ENCODE measurements at regions of chr15 and their contacts with region 1.

Region 1: GRCh38 chr15:63599401-63600000 is 2.3 kb downstream of the FBXL22 start:
- DNase-seq: peak; percentile 72
- H3K4me3 ChIP-seq: peak overlapping the region; percentile 63 to 73
- H3K27ac ChIP-seq: peak overlapping the region; percentile 88 to 89
- H3K4me1 ChIP-seq: peaks cover 20% of the 10 kb centered on the region
- H3K27me3 ChIP-seq: no peaks in the 10 kb centered on the region
- CTCF ChIP-seq: peak; percentile 65 to 90 (median 83)
- POLR2A ChIP-seq: no peak

Region 2: DNA sequence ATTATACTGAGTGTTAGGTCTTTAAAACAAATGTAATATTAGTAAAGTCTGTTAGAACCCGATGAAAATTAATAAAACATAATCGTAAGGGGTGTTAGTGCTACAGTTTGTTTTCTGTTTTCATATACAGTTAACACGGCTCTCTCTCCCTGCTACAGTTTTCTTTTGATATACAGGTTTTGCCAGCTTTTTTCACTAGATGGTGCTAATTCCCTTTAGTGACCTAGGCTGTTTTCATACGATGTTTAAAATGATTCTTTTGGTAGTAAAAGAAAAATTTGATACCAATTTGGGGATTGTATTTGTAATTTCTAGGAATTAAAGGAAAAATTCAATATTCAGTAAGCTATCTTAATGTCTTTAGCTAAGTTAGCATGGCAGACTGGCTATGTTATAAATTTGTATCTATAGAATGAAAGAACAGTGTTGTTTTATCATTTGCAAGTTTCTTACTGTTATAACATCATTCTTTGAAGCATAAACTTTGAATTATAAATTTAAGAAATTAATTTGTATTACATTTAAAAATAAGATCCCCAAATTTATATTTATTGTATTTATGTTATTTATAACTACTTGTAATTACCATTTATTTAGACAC is 310.6 kb before region 1 on chr15:
- intact Hi-C with region 1: loop called (anchors 5 kb)
- DNase-seq: no peak
- H3K4me3 ChIP-seq: no peak overlapping the region
- H3K27ac ChIP-seq: no peak overlapping the region
- H3K4me1 ChIP-seq: no peaks in the 10 kb centered on the region
- H3K27me3 ChIP-seq: no peaks in the 10 kb centered on the region
- CTCF ChIP-seq: peak in 3 of 4 experiments; percentile 53 to 77 (median 76)
- POLR2A ChIP-seq: no peak

Region 3: GRCh38 chr15:63466378-63467192 is 132.9 kb before region 1 on chr15:
- intact Hi-C with region 1: loop called (anchors 2 kb)
- DNase-seq: peak; percentile 68
- H3K4me3 ChIP-seq: no peak overlapping the region
- H3K27ac ChIP-seq: peak overlapping the region; percentile 47 to 73
- H3K4me1 ChIP-seq: peaks cover 9% of the 10 kb centered on the region
- H3K27me3 ChIP-seq: no peaks in the 10 kb centered on the region
- CTCF ChIP-seq: peak; percentile 15 to 73 (median 50)
- POLR2A ChIP-seq: no peak

Region 4: DNA sequence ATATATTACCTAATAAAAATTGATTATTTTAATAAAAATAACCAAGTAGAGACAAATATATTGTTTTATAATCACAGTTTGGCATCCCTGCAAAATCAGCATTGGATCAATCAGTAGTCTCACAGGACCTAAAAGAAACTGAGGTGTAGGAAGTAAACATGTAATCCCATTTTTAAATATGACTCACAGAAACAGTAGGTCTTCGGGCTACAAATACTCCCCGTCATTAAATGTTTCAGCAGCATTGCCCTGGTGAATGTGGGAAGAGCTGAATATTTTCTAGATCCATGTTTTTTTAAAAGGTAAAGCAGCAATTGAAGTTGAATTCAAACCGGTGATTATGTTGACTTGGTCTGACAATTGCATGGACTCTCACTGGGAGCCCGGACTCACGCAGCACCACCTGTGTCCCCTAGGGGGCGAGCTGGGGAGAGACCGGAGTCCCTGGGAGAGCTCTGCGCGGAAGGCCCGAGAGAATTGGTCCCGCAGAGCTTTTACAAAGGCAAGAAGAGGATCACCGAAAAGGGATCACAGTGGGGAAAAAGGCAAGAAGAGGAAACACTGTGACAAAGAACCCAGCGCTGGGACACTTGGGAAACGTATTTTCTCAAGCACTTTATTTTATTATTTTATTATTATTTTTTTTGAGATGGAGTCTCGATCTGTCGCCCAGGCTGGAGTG is 112.3 kb before region 1 on chr15:
- intact Hi-C with region 1: loop called (anchors 5 kb)
- DNase-seq: peak; percentile 86
- H3K4me3 ChIP-seq: no peak overlapping the region
- H3K27ac ChIP-seq: no peak overlapping the region
- H3K4me1 ChIP-seq: no peaks in the 10 kb centered on the region
- H3K27me3 ChIP-seq: no peaks in the 10 kb centered on the region
- CTCF ChIP-seq: peak; percentile 65 to 85 (median 78)
- POLR2A ChIP-seq: no peak

Region 5: GRCh38 chr15:63504247-63504978 is 95.1 kb before region 1 on chr15 and contains the start of gene USP3:
- intact Hi-C with region 1: loop called (anchors 1 kb)
- DNase-seq: peak; percentile 93
- H3K4me3 ChIP-seq: peak within 1 kb of the TSS; percentile 79 to 91
- H3K27ac ChIP-seq: peak within 1 kb of the TSS; percentile 91 to 99
- H3K4me1 ChIP-seq: peaks cover 22% of the 10 kb centered on the region
- H3K27me3 ChIP-seq: no peaks in the 10 kb centered on the region
- CTCF ChIP-seq: peak; percentile 38 to 74 (median 44)
- POLR2A ChIP-seq: peak; percentile 75
- total RNA-seq, gene USP3: 44.2 to 45.8 TPM

Measured in prostate gland (tissue), 2 donors.